Calu3 (cell line): ENCODE measurements at regions of chr2 and their contacts with region 1.

Region 1: GRCh38 chr2:200306196-200306930 is at the start of gene SPATS2L:
- DNase-seq: peak; percentile 77
- H3K4me3 Mint-ChIP-seq: peak within 1 kb of the TSS; percentile 83
- H3K27ac Mint-ChIP-seq: peak within 1 kb of the TSS; percentile 97
- H3K4me1 Mint-ChIP-seq: peaks cover 56% of the 10 kb centered on the region
- H3K27me3 Mint-ChIP-seq: no peaks in the 10 kb centered on the region
- CTCF ChIP-seq: no peak
- total RNA-seq, gene SPATS2L: 378 and 497 TPM in 2 replicates

Region 2: GRCh38 chr2:198857246-198857645 is 1449.1 kb before region 1 on chr2:
- CTCF ChIA-PET with region 1: no interaction called
- intact Hi-C with region 1: no loop called
- DNase-seq: no peak
- H3K4me3 Mint-ChIP-seq: no peak overlapping the region
- H3K27ac Mint-ChIP-seq: no peak overlapping the region
- H3K4me1 Mint-ChIP-seq: no peaks in the 10 kb centered on the region
- H3K27me3 Mint-ChIP-seq: no peaks in the 10 kb centered on the region
- CTCF ChIP-seq: no peak

Region 3: GRCh38 chr2:199979832-199980628 is 326.3 kb before region 1 on chr2:
- CTCF ChIA-PET with region 1: interaction called, 7 read pairs
- intact Hi-C with region 1: loop called (anchors 1 kb)
- DNase-seq: peak; percentile 91
- H3K4me3 Mint-ChIP-seq: peak overlapping the region; percentile 27
- H3K27ac Mint-ChIP-seq: peak overlapping the region; percentile 51
- H3K4me1 Mint-ChIP-seq: peaks cover 56% of the 10 kb centered on the region
- H3K27me3 Mint-ChIP-seq: no peaks in the 10 kb centered on the region
- CTCF ChIP-seq: peak; percentile 85

Region 4: GRCh38 chr2:200104015-200104414 is 202.3 kb before region 1 on chr2:
- CTCF ChIA-PET with region 1: no interaction called
- intact Hi-C with region 1: no loop called
- DNase-seq: no peak
- H3K4me3 Mint-ChIP-seq: no peak overlapping the region
- H3K27ac Mint-ChIP-seq: no peak overlapping the region
- H3K4me1 Mint-ChIP-seq: no peaks in the 10 kb centered on the region
- H3K27me3 Mint-ChIP-seq: no peaks in the 10 kb centered on the region
- CTCF ChIP-seq: no peak

Region 5: DNA sequence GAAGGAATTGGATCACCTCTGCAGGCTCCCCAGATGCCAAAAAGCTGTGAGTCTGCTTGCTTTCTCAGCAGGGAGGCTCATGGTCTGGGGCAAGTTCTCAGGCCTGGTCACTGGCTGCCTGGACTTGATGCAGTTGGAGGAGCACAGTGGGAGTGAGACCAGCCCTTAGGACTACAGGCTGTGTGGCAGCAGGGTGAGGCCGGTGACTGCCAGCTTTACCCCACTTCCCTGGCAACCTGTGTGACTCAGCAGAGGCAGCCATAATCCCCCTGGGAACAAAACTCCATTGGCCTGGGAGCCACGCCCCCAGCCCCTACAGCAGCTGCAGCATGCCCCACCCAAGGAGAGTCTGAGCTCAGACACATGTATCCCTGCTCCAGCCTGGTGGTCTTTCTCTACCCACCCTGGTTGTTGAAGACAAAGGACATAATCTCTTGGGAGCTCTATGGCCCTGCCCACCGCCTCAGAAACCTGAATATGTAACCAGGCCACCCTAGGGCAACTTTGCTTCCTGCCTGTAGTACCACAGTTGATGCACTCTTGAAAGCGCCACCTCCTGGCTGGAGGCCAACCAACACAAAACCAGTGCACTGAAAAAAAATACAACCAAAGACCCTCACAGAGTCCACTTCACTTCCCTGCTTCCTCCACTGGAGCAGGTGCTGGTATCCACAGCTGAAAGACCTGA is 106.6 kb before region 1 on chr2:
- CTCF ChIA-PET with region 1: no interaction called
- intact Hi-C with region 1: no loop called
- DNase-seq: peak; percentile 37
- H3K4me3 Mint-ChIP-seq: no peak overlapping the region
- H3K27ac Mint-ChIP-seq: no peak overlapping the region
- H3K4me1 Mint-ChIP-seq: no peaks in the 10 kb centered on the region
- H3K27me3 Mint-ChIP-seq: no peaks in the 10 kb centered on the region
- CTCF ChIP-seq: no peak

Region 6: DNA sequence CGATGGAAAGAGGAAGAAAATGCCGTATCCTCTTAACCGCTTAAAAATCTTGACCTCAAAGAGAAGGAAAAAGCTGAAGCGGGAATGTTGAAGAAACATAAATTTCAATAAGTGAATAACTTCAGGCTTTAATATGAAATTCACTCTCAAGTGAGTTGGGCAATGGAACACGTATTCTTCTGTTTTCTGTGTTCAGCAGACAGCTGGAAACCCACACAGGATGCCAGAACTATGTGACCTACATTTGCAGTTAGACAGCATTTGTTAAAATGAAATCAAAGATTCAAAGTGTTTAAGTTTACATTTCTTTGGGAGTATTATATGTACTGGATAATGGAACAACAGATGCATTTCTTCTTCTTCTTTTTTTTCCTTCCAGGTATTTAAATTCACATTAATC is 80.4 kb before region 1 on chr2:
- CTCF ChIA-PET with region 1: no interaction called
- intact Hi-C with region 1: no loop called
- DNase-seq: no peak
- H3K4me3 Mint-ChIP-seq: no peak overlapping the region
- H3K27ac Mint-ChIP-seq: no peak overlapping the region
- H3K4me1 Mint-ChIP-seq: peaks cover 21% of the 10 kb centered on the region
- H3K27me3 Mint-ChIP-seq: no peaks in the 10 kb centered on the region
- CTCF ChIP-seq: no peak

Region 7: GRCh38 chr2:200319548-200320337 is 13.4 kb after region 1 on chr2:
- CTCF ChIA-PET with region 1: interaction called, 4 read pairs
- intact Hi-C with region 1: loop called (anchors 2 kb)
- DNase-seq: no peak
- H3K4me3 Mint-ChIP-seq: no peak overlapping the region
- H3K27ac Mint-ChIP-seq: peak overlapping the region; percentile 60
- H3K4me1 Mint-ChIP-seq: peaks cover 84% of the 10 kb centered on the region
- H3K27me3 Mint-ChIP-seq: no peaks in the 10 kb centered on the region
- CTCF ChIP-seq: no peak

Region 8: DNA sequence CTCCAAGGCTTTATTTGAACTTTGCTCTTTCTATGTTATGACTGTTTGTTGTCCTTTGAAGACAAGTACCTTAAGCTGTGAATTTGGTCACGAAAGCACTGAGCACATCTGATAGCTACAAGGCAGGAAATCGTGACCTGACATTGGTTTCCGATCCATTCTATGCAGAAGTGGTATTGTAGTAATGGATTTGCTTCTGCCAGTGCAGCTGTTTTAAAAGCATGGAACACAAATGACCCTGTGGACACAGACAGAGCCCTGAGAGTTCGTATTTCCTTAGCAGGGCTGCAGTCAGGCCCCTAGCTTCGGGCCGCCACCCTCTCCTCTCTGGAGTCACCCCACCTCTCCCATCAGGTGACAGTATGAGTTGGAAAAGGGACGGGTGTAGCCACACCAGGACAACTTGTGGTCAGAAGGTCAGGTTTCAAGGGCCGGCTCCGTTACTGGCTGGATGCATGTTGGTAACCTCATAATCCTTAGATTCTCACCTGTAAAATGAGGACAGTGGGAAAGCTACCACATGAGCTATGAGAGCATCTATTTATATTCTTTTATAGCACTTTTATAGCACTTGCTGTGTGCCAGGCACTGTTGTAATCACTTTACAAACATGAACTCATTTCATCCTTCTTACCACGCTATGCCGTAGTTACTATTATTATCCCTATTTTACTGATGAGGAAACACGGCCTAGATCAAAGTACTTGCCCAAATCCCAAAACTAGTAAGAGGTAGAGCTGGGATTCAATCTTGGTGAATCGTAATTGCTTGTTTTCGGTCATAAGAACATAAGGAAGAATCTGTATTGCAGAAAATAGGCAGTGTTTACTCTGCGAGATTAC is 70.4 kb after region 1 on chr2:
- CTCF ChIA-PET with region 1: no interaction called
- intact Hi-C with region 1: loop called (anchors 2 kb)
- DNase-seq: no peak
- H3K4me3 Mint-ChIP-seq: peak overlapping the region; percentile 79
- H3K27ac Mint-ChIP-seq: peak overlapping the region; percentile 93
- H3K4me1 Mint-ChIP-seq: peaks cover 88% of the 10 kb centered on the region
- H3K27me3 Mint-ChIP-seq: no peaks in the 10 kb centered on the region
- CTCF ChIP-seq: no peak

Region 9: GRCh38 chr2:200405599-200406298 is 99.4 kb after region 1 on chr2:
- CTCF ChIA-PET with region 1: no interaction called
- intact Hi-C with region 1: loop called (anchors 2 kb)
- DNase-seq: peak; percentile 58
- H3K4me3 Mint-ChIP-seq: peak overlapping the region; percentile 61
- H3K27ac Mint-ChIP-seq: peak overlapping the region; percentile 85
- H3K4me1 Mint-ChIP-seq: peaks cover 87% of the 10 kb centered on the region
- H3K27me3 Mint-ChIP-seq: no peaks in the 10 kb centered on the region
- CTCF ChIP-seq: no peak

Region 10: GRCh38 chr2:200483729-200484198 is 177.4 kb after region 1 on chr2:
- CTCF ChIA-PET with region 1: no interaction called
- intact Hi-C with region 1: loop called (anchors 5 kb)
- DNase-seq: peak; percentile 70
- H3K4me3 Mint-ChIP-seq: no peak overlapping the region
- H3K27ac Mint-ChIP-seq: no peak overlapping the region
- H3K4me1 Mint-ChIP-seq: peaks cover 37% of the 10 kb centered on the region
- H3K27me3 Mint-ChIP-seq: no peaks in the 10 kb centered on the region
- CTCF ChIP-seq: peak; percentile 62